ENCODE measurements at regions of chr20 and their contacts with region 1.

Region 1: GRCh38 chr20:31723319-31724078 is 831 bp upstream of the BCL2L1 start:
- DNase-seq: peak; percentile 91
- H3K4me3 ChIP-seq: peak overlapping the region; percentile 76
- CTCF ChIP-seq: peak; percentile 88

Region 2: DNA sequence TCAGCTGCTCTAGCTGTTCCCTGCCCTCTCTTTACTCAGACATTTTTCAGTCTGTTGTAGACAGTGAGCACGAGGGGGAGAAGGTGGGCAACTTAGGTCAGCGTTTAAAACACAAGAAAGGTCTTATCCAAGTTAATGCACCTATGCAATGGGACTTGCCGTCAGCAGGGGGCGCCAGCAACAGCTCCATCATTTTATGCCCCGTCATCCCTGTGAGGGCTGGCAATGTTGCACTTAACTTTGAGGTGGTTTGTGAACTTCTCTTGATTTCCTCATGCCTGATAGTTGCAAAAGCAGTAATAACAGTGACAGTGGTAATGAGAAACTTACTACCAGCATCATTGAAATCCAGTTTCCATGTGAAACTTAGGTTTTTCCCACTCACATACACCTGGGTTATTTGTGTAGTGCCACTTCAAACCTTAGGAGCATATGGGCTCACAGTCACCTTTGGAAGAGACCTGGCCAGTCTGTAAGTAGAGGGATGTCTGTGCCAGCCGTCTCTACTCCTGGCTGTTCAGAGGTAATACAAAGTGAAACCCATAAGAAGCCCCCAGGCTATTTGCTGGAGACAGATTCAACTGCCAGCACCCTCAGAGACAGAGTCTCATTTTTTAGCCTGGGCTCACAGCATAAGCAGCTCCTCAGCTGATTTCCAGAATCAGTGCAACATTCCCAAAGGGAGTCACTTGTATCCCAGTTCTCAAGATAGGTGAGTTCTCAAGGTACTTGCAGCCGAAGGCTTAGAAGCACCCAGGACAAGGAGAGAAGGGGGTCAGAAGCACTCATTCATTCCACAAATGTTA is 163.2 kb before region 1 on chr20:
- CTCF ChIA-PET with region 1: interaction called, 37 read pairs
- POLR2A ChIA-PET with region 1: no interaction called
- DNase-seq: no peak
- H3K4me3 ChIP-seq: no peak overlapping the region
- CTCF ChIP-seq: peak; percentile 89

Region 3: DNA sequence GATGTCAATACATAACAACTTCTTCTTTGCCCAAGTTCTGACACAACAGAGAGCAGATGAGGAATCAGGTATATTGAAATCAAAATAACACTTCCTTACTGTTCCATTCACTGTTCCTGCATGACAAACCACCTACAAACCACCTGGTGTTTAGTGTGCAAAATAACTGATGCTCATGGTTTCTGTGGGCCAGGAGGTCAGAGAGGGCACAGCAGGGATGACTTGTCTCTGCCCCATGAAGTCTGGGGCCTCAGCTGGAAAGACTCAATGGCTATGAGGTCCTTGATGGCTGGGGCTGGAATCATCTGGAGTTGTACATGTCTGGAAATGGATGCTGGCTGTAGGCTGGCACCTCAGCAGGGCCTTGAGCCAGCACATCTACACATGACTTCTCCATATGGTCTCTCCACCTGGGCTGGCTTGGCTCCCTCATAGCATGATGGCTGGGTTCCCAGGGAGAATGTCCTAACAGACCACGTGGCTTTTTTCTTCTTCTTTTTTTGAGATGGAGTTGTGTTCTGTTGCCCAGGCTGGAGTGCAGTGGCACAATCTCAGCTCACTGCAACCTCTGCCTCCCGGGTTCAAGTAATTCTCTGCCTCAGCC is 93.2 kb before region 1 on chr20:
- CTCF ChIA-PET with region 1: interaction called, 238 read pairs
- POLR2A ChIA-PET with region 1: interaction called, 6 read pairs
- DNase-seq: no peak
- H3K4me3 ChIP-seq: no peak overlapping the region
- CTCF ChIP-seq: no peak

Region 4: GRCh38 chr20:31652917-31653396 is 70.5 kb before region 1 on chr20:
- CTCF ChIA-PET with region 1: interaction called, 534 read pairs
- POLR2A ChIA-PET with region 1: interaction called, 3 read pairs
- DNase-seq: no peak
- H3K4me3 ChIP-seq: no peak overlapping the region
- CTCF ChIP-seq: no peak

Region 5: DNA sequence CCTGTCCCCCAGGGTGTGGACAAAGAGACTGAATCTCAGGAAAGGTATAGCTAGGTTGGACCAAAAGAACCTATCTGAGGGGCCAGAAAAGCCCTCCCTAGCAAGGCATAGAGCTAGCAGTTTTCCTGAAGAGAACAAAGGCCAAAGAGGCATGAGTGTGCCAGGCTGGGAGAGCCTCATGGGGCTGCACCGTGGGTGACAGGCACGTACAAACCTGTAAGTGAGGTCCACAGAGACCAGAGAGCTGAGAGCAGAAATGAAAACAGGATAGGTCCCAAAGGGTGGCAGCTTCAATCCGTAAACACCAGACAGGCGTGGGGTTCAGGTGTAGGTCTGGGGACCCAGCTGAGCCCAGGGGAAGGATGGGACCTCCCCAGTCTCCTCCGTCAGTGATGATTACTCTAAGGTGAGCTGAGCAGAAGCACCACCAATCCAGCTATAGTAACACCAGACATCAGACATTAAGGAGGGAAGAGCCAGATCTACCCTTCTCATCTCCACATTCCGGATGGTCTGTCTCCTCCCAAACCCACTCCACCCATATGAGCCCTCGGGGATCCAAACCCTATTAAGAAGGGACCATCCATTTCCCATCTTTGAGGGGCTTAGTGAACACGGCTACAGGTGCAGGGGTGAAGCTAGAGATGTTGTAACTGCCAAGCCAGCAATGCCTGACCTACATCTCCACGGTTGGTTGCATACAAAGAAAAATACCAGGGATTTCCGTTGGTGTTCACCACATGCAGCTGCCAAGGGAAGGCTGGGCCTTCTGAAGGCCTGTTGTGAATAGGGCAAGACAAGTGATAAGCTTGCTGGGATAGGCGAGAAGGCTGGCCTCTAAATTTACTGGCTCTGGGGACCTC is 39.1 kb before region 1 on chr20:
- CTCF ChIA-PET with region 1: interaction called, 29 read pairs
- POLR2A ChIA-PET with region 1: no interaction called
- DNase-seq: no peak
- H3K4me3 ChIP-seq: no peak overlapping the region
- CTCF ChIP-seq: no peak

Region 6: GRCh38 chr20:31712564-31713311 is 10.8 kb before region 1 on chr20:
- CTCF ChIA-PET with region 1: interaction called, 79 read pairs
- POLR2A ChIA-PET with region 1: interaction called, 8 read pairs
- DNase-seq: no peak
- H3K4me3 ChIP-seq: peak overlapping the region; percentile 43
- CTCF ChIP-seq: no peak

Region 7: DNA sequence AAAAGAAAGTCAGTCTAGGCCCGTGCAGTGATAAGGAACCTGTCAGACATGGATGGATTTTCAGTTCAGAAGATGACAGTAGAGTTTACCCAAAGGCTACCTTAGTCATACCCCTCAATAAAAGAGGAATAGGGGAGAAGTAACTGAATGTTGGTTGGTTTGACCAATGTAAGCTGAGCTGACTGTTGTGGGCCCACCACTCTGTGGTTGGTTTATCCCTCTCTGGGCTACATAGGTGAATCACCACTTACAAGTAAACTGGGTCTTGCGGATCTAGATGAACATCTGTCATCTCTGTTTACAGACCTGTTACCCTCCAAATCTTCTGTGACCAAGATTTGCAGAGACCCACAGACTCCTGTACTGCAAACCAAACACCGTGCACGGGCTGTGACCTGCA is 58.4 kb after region 1 on chr20:
- CTCF ChIA-PET with region 1: interaction called, 10 read pairs
- POLR2A ChIA-PET with region 1: no interaction called
- DNase-seq: no peak
- H3K4me3 ChIP-seq: no peak overlapping the region
- CTCF ChIP-seq: no peak

Region 8: GRCh38 chr20:31861346-31862156 is 138.1 kb after region 1 on chr20:
- CTCF ChIA-PET with region 1: no interaction called
- POLR2A ChIA-PET with region 1: no interaction called
- DNase-seq: no peak
- H3K4me3 ChIP-seq: peak overlapping the region; percentile 48
- CTCF ChIP-seq: no peak

Region 9: DNA sequence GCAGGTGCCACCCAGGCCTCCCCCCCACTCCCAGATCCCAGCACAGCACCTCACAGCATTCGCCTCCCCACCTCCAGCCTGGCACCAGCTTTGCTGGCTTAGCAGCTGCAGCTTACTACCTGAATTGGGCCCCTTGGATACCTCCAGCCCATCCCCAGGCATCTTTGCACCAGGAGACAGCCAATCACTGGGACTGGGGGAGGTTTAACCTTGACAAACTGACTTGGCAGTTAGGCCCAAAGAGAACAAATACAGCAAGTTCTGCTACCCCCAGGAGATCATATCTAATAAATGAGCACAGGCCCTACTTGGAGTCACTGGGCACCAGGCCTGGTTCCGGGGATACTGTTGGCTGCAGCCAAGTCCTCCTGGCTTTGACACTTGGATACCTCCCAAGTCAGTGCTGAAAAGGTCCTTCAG is 219.6 kb after region 1 on chr20:
- CTCF ChIA-PET with region 1: no interaction called
- POLR2A ChIA-PET with region 1: no interaction called
- DNase-seq: no peak
- H3K4me3 ChIP-seq: no peak overlapping the region
- CTCF ChIP-seq: no peak

Region 10: GRCh38 chr20:32354587-32355416 is 631.3 kb after region 1 on chr20:
- CTCF ChIA-PET with region 1: no interaction called
- POLR2A ChIA-PET with region 1: no interaction called
- DNase-seq: no peak
- H3K4me3 ChIP-seq: no peak overlapping the region
- CTCF ChIP-seq: no peak